Activated CD8-positive, alpha-beta T cell treated with anti-CD3 and anti-CD28 coated beads, Interleukin-2, amount 10 ng/mL, durations not matched to agents 7 days and 5 days (primary cell): ENCODE measurements at regions of chr14 and their contacts with region 1.

Region 1: GRCh38 chr14:93086441-93087055 is 29.2 kb downstream of the ITPK1 start:
- DNase-seq: no peak
- ATAC-seq: peak; percentile 41
- H3K4me3 Mint-ChIP-seq: peak overlapping the region; percentile 26
- H3K27ac Mint-ChIP-seq: peak overlapping the region; percentile 87
- H3K4me1 Mint-ChIP-seq: peaks cover 83% of the 10 kb centered on the region
- H3K27me3 Mint-ChIP-seq: no peaks in the 10 kb centered on the region

Region 2: DNA sequence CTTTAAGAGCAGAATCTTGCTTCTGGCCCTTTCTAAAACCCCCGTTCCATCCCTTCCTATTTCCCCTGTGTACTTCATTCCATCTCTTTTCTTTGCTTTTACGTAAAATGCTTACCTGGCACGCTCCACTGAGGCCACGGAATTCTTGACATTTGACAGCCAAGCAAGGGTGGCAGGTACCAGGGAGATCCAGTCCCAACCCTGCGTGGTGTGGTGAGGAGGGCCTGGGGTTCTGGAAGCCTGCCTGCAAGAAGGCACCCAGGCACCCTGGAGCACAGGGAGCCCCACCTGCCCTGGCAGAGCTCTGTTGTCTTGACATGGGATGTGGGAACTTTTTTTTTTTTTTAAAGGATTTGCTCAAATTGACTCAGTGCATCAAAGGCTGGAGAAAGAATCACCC is 19.5 kb before region 1 on chr14:
- CTCF ChIA-PET with region 1: interaction called, 4 read pairs
- POLR2A ChIA-PET with region 1: interaction called, 11 read pairs
- DNase-seq: no peak
- ATAC-seq: no peak
- H3K4me3 Mint-ChIP-seq: peak overlapping the region; percentile 41
- H3K27ac Mint-ChIP-seq: peak overlapping the region; percentile 99
- H3K4me1 Mint-ChIP-seq: peaks cover 83% of the 10 kb centered on the region
- H3K27me3 Mint-ChIP-seq: no peaks in the 10 kb centered on the region

Region 3: GRCh38 chr14:93239869-93240677 is 153.5 kb after region 1 on chr14:
- CTCF ChIA-PET with region 1: no interaction called
- POLR2A ChIA-PET with region 1: no interaction called
- DNase-seq: no peak
- ATAC-seq: no peak
- H3K4me3 Mint-ChIP-seq: no peak overlapping the region
- H3K27ac Mint-ChIP-seq: no peak overlapping the region
- H3K4me1 Mint-ChIP-seq: no peaks in the 10 kb centered on the region
- H3K27me3 Mint-ChIP-seq: no peaks in the 10 kb centered on the region